Body of pancreas (tissue), 4 donors: ENCODE measurements at regions of chr15 and their contacts with region 1.

Region 1: DNA sequence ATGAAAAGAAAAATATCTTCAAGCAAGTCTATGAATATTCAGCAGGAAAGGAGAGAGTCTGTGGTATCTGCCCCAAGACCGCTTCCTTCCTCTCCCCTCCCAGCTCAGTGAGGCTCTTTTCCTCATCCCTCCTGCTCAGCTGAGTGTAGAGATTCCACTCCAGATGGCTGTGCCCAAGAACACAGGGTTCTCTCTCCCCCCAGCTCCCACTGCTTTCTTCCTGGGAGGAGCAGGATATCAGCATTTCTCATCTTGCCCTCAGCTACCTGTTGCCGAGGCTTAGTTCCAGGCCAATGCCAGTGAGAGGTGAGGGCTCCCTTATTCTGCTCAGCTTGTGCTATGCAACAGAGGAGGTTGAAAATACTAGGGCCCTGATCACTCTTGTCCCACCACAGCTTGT is 211.9 kb downstream of the SV2B start:
- DNase-seq: no peak
- ATAC-seq: no peak
- H3K4me3 ChIP-seq: no peak overlapping the region
- H3K27ac ChIP-seq: no peak overlapping the region
- H3K4me1 ChIP-seq: no peaks in the 10 kb centered on the region
- H3K27me3 ChIP-seq: no peaks in the 10 kb centered on the region
- CTCF ChIP-seq: no peak
- POLR2A ChIP-seq: no peak

Region 2: GRCh38 chr15:90808517-90809235 is 503.3 kb before region 1 on chr15:
- intact Hi-C with region 1: no loop called
- DNase-seq: no peak
- ATAC-seq: no peak
- H3K4me3 ChIP-seq: no peak overlapping the region
- H3K27ac ChIP-seq: no peak overlapping the region
- H3K4me1 ChIP-seq: no peaks in the 10 kb centered on the region
- H3K27me3 ChIP-seq: no peaks in the 10 kb centered on the region
- CTCF ChIP-seq: no peak
- POLR2A ChIP-seq: peak in 1 of 3 donors; percentile 18

Region 3: GRCh38 chr15:91589356-91589755 is 277.4 kb after region 1 on chr15:
- intact Hi-C with region 1: no loop called
- DNase-seq: no peak
- ATAC-seq: no peak
- H3K4me3 ChIP-seq: no peak overlapping the region
- H3K27ac ChIP-seq: no peak overlapping the region
- H3K4me1 ChIP-seq: no peaks in the 10 kb centered on the region
- H3K27me3 ChIP-seq: no peaks in the 10 kb centered on the region
- CTCF ChIP-seq: no peak
- POLR2A ChIP-seq: no peak

Region 4: DNA sequence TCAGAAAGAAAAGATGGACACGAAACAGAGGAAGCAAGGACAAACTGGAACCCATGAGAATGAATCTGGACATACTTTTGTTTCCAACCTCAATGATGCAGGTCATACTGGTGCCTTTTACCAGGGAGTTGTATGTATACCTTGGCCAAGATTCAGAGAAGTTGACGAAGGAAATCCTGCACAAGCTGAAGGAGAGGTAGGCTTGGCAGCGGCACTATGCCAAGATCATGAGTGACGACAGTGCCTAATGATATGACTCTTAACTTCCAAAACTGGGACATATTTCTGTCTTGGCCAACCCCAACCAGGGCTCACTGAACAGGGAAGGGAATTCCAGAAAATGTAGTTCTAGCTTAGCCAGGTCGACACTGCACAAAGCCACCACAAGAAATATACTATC is 392.4 kb after region 1 on chr15:
- intact Hi-C with region 1: loop called (anchors 5 kb)
- DNase-seq: no peak
- ATAC-seq: no peak
- H3K4me3 ChIP-seq: no peak overlapping the region
- H3K27ac ChIP-seq: no peak overlapping the region
- H3K4me1 ChIP-seq: no peaks in the 10 kb centered on the region
- H3K27me3 ChIP-seq: no peaks in the 10 kb centered on the region
- CTCF ChIP-seq: no peak
- POLR2A ChIP-seq: no peak

Region 5: DNA sequence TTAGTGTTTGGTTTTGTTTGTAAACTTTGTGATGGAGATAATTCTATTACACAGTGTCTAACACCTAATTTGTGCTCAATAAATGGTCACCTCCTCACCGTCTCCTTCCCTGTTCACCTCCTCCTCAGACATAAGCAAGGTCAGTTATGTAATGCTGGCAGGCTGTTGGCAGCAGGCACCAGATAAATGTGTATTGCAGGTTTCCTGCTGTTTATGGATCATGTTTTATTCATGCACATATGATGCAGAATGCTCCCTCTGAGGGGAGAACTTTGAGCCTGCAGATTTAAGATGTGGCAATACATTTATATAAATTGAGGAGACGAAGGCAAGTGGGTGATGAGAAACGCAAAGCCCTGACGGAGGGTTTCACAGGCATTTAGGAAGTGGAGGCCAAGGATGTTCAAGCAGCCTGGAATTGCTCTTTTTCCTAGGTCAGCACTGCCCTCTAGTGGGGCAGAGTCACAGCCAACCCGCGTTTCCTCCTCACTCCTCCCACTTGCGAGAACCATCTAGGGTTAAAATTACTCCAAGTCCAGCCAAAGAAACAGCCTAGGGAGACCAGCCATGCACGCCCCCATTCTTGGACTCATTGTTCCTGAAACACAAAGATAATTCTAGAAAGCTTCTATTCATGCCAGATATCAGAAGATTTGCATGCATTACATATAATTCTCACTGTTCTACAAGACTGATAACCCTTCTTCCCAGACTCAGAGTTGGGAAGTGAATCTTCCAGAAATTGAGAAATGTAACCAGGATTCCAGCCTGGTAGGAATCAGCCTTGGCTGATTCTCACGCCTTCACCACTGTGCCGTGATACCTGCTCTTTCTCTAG is 770.2 kb after region 1 on chr15:
- intact Hi-C with region 1: loop called (anchors 5 kb)
- DNase-seq: peak; percentile 47 to 60 (median 52)
- ATAC-seq: no peak
- H3K4me3 ChIP-seq: no peak overlapping the region
- H3K27ac ChIP-seq: no peak overlapping the region
- H3K4me1 ChIP-seq: no peaks in the 10 kb centered on the region
- H3K27me3 ChIP-seq: no peaks in the 10 kb centered on the region
- CTCF ChIP-seq: peak; percentile 43 to 74 (median 64)
- POLR2A ChIP-seq: no peak